HAP-1 (cell line): ENCODE measurements at regions of chr13 and their contacts with region 1.

Region 1: DNA sequence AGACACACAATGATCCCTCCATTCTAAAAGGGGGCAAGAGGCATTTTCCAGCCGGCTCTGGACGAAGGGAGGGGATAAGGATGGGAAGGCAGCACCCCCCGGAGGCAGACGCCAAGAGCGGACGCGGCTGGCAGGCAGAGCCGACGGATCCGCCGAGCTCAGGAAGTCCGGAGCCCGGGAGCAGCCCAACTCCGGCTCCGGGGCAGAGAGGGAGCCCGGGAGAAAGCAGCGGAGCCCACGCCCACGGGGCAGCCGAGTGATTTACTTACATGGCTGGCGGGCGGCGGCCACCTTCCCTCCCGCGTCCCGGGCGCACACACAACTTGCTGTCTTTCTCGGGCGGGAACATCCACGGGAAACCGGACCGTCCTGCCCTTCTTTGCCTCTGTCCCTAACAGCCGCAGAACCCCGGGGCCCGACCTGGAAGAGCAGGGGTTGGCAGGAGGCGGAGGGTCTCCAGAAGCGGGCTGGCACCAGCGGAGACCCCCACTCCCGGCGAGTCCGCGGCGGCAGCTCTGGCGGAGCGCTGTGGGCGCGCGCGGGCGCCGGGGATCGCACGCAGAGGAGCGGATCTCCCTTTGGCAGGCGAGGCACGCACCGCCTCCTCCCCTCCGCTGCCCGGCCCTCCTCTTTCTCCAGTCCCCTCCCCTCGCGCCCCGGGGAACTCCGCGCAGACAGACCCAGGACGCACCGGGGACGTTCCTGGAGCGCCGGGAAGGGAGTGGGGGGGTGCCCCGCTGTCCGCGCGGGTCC is at the start of gene LHFPL6:
- DNase-seq: peak; percentile 77 to 90
- H3K4me3 ChIP-seq: peak within 1 kb of the TSS; percentile 87
- H3K4me1 ChIP-seq: peaks cover 35% of the 10 kb centered on the region
- H3K27me3 ChIP-seq: no peaks in the 10 kb centered on the region

Region 2: DNA sequence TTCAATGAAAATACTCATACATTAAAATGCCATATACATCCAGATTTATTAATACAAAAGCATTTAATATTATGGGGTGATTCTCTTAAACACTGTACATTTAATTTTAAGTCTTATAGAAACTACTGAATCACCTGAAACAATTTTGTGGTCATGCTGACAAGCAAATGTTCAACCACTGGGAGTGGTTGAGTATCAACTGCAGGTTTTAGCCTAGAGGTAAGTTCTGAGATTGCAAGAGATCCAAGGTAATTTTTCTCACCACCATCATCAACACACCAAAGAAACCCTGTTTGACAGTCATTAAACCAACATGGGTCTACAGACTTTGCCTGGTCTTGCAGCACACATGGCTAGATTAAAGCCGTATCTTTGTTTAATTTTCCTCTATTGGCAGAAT is 196.1 kb before region 1 on chr13:
- in situ Hi-C with region 1: loop called (anchors 10 kb)
- DNase-seq: no peak
- H3K4me3 ChIP-seq: no peak overlapping the region
- H3K4me1 ChIP-seq: peaks cover 62% of the 10 kb centered on the region
- H3K27me3 ChIP-seq: no peaks in the 10 kb centered on the region